Activated CD4-positive, alpha-beta memory T cell treated with anti-CD3 and anti-CD28 coated beads for 36 hours (primary cell): ENCODE measurements at regions of chr1 and their contacts with region 1.

Region 1: GRCh38 chr1:88891318-88891950 is at the start of gene GTF2B:
- DNase-seq: peak; percentile 97
- H3K4me3 Mint-ChIP-seq: peak within 1 kb of the TSS; percentile 81
- H3K27ac Mint-ChIP-seq: peak within 1 kb of the TSS; percentile 84
- H3K4me1 Mint-ChIP-seq: peaks cover 41% of the 10 kb centered on the region
- H3K27me3 Mint-ChIP-seq: peaks cover 2% of the 10 kb centered on the region
- total RNA-seq, gene GTF2B: 34.2 to 39.4 TPM

Region 2: DNA sequence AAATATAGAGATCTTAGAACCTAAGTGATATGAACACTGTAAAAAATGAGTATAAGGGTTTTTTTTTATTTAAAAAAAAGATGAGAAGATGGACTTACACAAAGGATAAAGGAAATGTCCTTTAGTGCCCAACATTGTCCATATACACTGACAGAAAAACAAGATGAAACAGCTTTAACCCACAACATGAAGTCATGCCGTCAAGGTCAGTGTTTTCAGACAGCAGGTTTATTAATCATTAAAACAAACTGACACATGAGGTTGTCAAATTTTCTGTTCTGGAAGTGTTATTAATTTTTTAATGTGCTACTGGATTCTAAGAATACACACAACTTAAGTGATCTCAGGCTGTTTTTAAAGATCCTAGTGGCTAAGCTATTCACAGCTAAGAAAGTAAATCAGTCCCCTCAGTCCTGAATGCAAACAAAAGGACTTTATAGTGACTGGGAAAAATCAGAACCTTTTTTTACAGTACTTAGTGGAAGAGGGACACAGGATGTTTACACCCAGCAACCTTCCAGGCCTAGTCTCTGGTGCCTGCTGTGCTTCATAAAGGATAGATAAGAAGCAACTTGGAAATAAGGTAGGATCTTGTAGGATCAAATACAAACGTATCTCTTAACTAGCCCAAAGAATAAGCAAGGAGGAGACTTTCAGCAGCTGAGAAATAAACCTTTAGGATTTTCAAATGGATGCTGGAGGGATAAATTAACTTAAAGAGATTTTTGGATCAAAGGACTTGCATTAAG is 229.3 kb before region 1 on chr1:
- CTCF ChIA-PET with region 1: no interaction called
- POLR2A ChIA-PET with region 1: no interaction called
- intact Hi-C with region 1: loop called (anchors 5 kb)
- DNase-seq: no peak
- H3K4me3 Mint-ChIP-seq: no peak overlapping the region
- H3K27ac Mint-ChIP-seq: no peak overlapping the region
- H3K4me1 Mint-ChIP-seq: peaks cover 29% of the 10 kb centered on the region
- H3K27me3 Mint-ChIP-seq: peaks cover 2% of the 10 kb centered on the region

Region 3: GRCh38 chr1:88867743-88868521 is 23.5 kb before region 1 on chr1:
- CTCF ChIA-PET with region 1: interaction called, 4 read pairs
- POLR2A ChIA-PET with region 1: interaction called, 3 read pairs
- intact Hi-C with region 1: loop called (anchors 1 kb)
- DNase-seq: no peak
- H3K4me3 Mint-ChIP-seq: no peak overlapping the region
- H3K27ac Mint-ChIP-seq: peak overlapping the region; percentile 62
- H3K4me1 Mint-ChIP-seq: peaks cover 41% of the 10 kb centered on the region
- H3K27me3 Mint-ChIP-seq: no peaks in the 10 kb centered on the region

Region 4: GRCh38 chr1:88990426-88990825 is 99.0 kb after region 1 on chr1:
- CTCF ChIA-PET with region 1: no interaction called
- POLR2A ChIA-PET with region 1: no interaction called
- intact Hi-C with region 1: loop called (anchors 1 kb)
- DNase-seq: no peak
- H3K4me3 Mint-ChIP-seq: peak overlapping the region; percentile 35
- H3K27ac Mint-ChIP-seq: peak overlapping the region; percentile 70
- H3K4me1 Mint-ChIP-seq: peaks cover 47% of the 10 kb centered on the region
- H3K27me3 Mint-ChIP-seq: no peaks in the 10 kb centered on the region

Region 5: DNA sequence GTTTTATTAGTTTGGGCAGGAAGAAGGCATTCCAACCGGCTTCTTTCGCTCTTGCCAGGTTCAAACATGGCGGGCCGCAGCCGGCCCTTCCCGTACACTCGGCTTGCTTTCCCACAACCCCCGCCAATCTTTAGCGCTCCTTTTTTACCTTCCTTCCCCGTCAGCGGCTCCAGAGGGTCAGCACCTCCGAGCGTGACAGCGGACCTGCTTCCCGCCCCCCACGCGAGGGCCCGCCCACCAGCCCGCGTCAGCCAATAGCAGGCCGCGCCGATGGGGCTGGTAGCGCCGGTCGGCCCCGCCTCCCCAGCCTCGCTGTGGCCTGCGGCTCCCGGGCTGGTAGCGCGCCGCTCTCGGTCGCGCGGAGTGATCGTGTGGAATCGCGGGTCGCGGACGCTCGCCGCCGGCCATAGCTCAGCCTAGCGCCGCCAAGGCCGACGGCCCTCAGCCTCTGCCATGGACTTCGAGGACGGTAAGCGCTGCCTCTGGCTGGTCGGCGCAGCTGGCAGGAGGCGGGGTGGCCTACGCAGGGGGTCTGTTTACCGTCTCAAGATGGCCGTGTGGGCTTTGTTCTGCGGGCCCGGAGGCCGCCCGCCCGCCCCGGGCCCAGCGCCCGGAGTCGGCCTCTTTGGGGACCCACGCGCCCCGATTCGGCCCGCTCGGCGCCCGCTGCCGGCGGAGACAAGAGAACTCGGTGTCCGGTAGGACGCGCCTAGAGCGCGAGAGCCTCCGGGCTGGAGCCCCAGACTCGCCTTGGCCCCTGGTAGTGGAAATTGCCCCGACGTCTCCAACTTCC is 1103.6 kb after region 1 on chr1 and contains the start of gene ZNF326:
- CTCF ChIA-PET with region 1: no interaction called
- POLR2A ChIA-PET with region 1: no interaction called
- intact Hi-C with region 1: loop called (anchors 2 kb)
- DNase-seq: peak; percentile 96
- H3K4me3 Mint-ChIP-seq: peak within 1 kb of the TSS; percentile 99
- H3K27ac Mint-ChIP-seq: peak within 1 kb of the TSS; percentile 89
- H3K4me1 Mint-ChIP-seq: peaks cover 39% of the 10 kb centered on the region
- H3K27me3 Mint-ChIP-seq: no peaks in the 10 kb centered on the region
- total RNA-seq, gene ZNF326: 17.2 to 17.3 TPM